PC-9 (cell line): ENCODE measurements at regions of chr11 and their contacts with region 1.

Region 1: DNA sequence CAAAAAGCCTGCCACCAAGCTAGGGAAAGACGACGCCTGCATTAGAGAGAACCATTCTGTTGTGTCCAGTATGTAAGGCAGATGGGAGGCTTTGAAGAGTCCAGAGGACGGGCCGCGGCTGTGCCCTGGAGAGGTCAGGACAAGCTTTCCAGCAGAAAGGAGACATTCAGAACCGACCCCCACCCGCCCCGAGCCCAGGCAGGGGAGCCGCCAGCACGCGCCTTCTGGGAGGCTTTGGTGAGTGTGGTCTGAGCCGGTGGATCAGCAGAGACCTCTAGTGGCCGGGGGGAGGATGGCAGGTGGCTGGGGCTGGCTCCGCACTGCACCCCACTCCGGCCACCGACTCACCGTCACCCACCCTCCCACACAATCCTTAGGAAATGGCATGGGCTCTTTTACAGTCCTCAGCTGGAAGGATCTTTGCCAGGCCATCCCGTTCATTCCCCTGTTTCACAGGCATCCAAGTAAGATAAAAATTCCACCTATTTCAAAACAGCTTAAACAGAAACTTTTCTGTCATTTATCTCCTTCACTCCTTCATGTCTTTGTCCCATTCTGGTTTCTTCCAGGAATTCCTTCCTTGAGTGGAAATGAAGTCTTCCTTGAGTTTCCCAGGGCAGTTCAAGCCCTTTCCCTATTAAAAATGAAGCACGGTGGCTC is 91.2 kb downstream of the FEZ1 start:
- DNase-seq: peak in 1 of 2 experiments; percentile 56
- H3K4me3 ChIP-seq: no peak overlapping the region
- H3K27ac ChIP-seq: no peak overlapping the region
- H3K4me1 ChIP-seq: no peaks in the 10 kb centered on the region
- H3K27me3 ChIP-seq: peaks cover 88% of the 10 kb centered on the region
- CTCF ChIP-seq: peak; percentile 91

Region 2: GRCh38 chr11:124934862-124935547 is 469.9 kb before region 1 on chr11:
- CTCF ChIA-PET with region 1: no interaction called
- POLR2A ChIA-PET with region 1: no interaction called
- intact Hi-C with region 1: no loop called
- DNase-seq: no peak
- H3K4me3 ChIP-seq: no peak overlapping the region
- H3K27ac ChIP-seq: no peak overlapping the region
- H3K4me1 ChIP-seq: 0 out of 2 replicates have a peak, but pooled peaks cover 7% of the 10 kb centered on the region
- H3K27me3 ChIP-seq: peaks cover 28% of the 10 kb centered on the region; the same call in 1 of the 2 replicates
- CTCF ChIP-seq: no peak

Region 3: DNA sequence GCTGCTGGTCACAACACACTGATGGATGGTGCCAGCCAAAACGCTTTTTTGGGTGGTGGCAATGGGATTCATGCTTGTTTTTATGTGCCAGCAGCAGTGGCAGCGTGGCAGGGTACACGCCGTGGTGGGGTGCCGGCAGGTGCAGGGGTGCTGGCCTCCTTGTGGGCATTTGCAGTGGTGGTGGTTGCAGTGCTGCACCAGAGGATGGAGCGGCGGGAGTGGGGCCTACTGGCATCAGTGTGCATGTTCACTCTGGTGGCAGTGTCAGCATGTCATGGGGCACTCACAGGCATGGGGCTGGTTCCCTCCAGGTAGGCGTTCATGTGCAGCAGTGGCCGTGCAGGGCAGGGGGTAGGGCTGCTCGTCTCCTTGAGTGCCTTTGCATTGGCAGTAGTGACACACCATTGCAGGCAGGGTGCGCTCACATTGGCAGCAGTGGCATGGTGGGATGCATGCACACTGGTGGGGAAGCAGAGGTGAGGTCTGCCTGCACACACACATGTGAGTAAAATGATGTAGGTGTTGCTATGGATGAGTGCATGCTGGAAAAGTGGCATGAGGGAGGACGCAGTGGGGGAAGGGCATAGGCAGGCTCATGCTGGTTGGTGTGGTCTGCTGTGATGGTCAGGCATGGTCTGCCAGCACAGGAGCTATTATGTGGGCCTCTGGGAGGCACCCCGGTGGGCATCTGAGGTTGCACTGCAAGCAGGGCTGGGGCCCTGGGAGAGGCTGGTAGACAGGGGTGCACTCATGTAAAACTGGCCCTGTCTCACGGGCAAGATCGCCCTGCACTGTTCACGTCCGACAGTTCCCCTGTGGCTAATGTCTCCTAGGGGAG is 421.0 kb before region 1 on chr11:
- CTCF ChIA-PET with region 1: no interaction called
- POLR2A ChIA-PET with region 1: no interaction called
- intact Hi-C with region 1: no loop called
- DNase-seq: no peak
- H3K4me3 ChIP-seq: no peak overlapping the region
- H3K27ac ChIP-seq: no peak overlapping the region
- H3K4me1 ChIP-seq: no peaks in the 10 kb centered on the region
- H3K27me3 ChIP-seq: no peaks in the 10 kb centered on the region
- CTCF ChIP-seq: no peak

Region 4: GRCh38 chr11:125091247-125091876 is 313.5 kb before region 1 on chr11:
- CTCF ChIA-PET with region 1: no interaction called
- POLR2A ChIA-PET with region 1: no interaction called
- intact Hi-C with region 1: loop called (anchors 1 kb)
- DNase-seq: peak; percentile 36 to 95
- H3K4me3 ChIP-seq: no peak overlapping the region; the same call in 1 of the 2 replicates
- H3K27ac ChIP-seq: peak overlapping the region; percentile 70
- H3K4me1 ChIP-seq: peaks cover 29% of the 10 kb centered on the region
- H3K27me3 ChIP-seq: no peaks in the 10 kb centered on the region
- CTCF ChIP-seq: peak; percentile 72

Region 5: DNA sequence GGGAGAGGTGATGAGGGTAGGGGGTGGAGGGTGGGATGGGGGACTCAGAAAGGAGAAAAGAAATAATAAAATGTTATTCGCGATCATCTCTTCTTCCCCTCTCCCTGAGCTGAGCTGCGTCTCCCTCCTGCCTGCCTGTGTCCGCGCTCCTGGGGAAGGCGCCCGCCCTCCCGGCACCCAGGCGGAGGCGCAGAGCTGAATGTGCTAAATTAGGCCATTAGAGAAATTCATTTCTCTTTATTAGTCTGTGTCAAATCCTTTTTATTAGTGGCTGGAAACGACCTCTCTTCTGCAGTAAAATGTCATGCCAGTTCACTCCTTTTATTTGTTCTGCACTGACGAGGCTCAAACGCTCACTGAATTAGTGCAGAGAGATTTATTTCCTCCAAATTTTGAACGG is 24.9 kb before region 1 on chr11:
- CTCF ChIA-PET with region 1: interaction called, 12 read pairs
- POLR2A ChIA-PET with region 1: no interaction called
- intact Hi-C with region 1: no loop called
- DNase-seq: no peak
- H3K4me3 ChIP-seq: no peak overlapping the region
- H3K27ac ChIP-seq: no peak overlapping the region
- H3K4me1 ChIP-seq: no peaks in the 10 kb centered on the region
- H3K27me3 ChIP-seq: peaks cover 97% of the 10 kb centered on the region
- CTCF ChIP-seq: no peak

Region 6: GRCh38 chr11:125443767-125444311 is 38.9 kb after region 1 on chr11:
- CTCF ChIA-PET with region 1: no interaction called
- POLR2A ChIA-PET with region 1: no interaction called
- intact Hi-C with region 1: no loop called
- DNase-seq: no peak
- H3K4me3 ChIP-seq: no peak overlapping the region
- H3K27ac ChIP-seq: no peak overlapping the region
- H3K4me1 ChIP-seq: no peaks in the 10 kb centered on the region
- H3K27me3 ChIP-seq: peaks cover 30% of the 10 kb centered on the region
- CTCF ChIP-seq: no peak